Activated naive CD4-positive, alpha-beta T cell treated with anti-CD3 and anti-CD28 coated beads, Interleukin-2, amount 10 ng/mL, durations not matched to agents 7 days and 5 days (primary cell): ENCODE measurements at regions of chr11 and their contacts with region 1.

Region 1: GRCh38 chr11:65418711-65419459 is 3.7 kb upstream of the NEAT1 start:
- DNase-seq: peak; percentile 95
- H3K4me3 Mint-ChIP-seq: peak overlapping the region; percentile 87
- H3K27ac Mint-ChIP-seq: peak overlapping the region; percentile 97
- H3K4me1 Mint-ChIP-seq: peaks cover 49% of the 10 kb centered on the region
- H3K27me3 Mint-ChIP-seq: peaks cover 20% of the 10 kb centered on the region

Region 2: GRCh38 chr11:65393513-65394090 is 25.3 kb before region 1 on chr11:
- CTCF ChIA-PET with region 1: interaction called, 13 read pairs
- DNase-seq: no peak
- H3K4me3 Mint-ChIP-seq: no peak overlapping the region
- H3K27ac Mint-ChIP-seq: no peak overlapping the region
- H3K4me1 Mint-ChIP-seq: peaks cover 26% of the 10 kb centered on the region
- H3K27me3 Mint-ChIP-seq: no peaks in the 10 kb centered on the region

Region 3: DNA sequence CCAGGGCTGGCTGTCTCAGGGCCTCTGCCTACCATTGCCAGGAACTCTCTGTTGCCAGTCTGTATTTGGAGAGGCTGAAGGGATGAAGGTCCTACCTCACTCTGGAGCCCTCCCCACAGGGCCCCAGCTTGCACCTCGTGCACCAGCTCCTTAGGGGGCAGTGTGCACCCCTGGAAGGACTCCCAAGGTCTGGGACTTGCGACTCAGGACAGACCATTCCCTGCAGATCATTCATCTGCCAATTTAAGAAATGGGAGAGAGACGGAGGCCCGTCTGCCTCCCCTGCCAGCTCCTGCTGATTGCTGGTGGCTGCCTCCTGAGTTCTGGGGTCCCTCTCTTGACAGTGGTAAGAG is 52.5 kb after region 1 on chr11:
- CTCF ChIA-PET with region 1: interaction called, 146 read pairs
- DNase-seq: peak; percentile 41
- H3K4me3 Mint-ChIP-seq: no peak overlapping the region
- H3K27ac Mint-ChIP-seq: peak overlapping the region; percentile 95
- H3K4me1 Mint-ChIP-seq: peaks cover 32% of the 10 kb centered on the region
- H3K27me3 Mint-ChIP-seq: no peaks in the 10 kb centered on the region

Region 4: DNA sequence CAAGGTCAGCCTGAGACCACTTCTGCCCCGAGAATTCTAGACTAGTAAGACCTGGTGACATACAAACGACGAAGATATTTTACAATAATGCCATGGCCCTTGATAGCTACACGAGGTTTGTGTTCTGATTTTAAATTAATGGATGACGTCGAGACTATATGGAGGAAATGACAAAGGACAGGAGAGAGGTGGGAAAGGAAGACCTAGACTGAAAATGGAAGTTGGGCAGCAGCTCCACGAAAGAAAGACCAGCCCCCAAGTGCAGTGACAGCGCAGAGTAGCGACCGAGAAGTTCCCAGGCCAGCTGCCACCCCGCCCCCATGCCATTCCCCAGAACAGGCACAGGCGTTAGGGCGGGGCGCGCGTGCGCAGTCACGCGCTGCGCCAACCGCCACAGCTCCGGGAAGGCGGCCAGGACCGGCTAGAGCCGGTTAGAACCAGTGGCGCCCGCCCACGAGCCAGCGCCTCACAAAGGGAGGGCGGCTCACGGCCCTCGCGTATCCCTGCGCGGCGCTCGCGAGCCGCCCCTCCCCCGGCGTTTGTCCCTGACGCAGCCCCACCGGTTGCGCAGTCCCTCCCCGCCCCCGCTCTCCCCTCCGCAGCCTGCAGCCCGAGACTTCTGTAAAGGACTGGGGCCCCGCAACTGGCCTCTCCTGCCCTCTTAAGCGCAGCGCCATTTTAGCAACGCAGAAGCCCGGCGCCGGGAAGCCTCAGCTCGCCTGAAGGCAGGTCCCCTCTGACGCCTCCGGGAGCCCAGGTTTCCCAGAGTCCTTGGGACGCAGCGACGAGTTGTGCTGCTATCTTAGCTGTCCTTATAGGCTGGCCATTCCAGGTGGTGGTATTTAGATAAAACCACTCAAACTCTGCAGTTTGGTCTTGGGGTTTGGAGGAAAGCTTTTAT is 78.5 kb after region 1 on chr11:
- CTCF ChIA-PET with region 1: interaction called, 145 read pairs
- DNase-seq: peak; percentile 99
- H3K4me3 Mint-ChIP-seq: no peak overlapping the region
- H3K27ac Mint-ChIP-seq: no peak overlapping the region
- H3K4me1 Mint-ChIP-seq: peaks cover 36% of the 10 kb centered on the region
- H3K27me3 Mint-ChIP-seq: peaks cover 4% of the 10 kb centered on the region

Region 5: GRCh38 chr11:65512306-65512705 is 93.4 kb after region 1 on chr11:
- CTCF ChIA-PET with region 1: interaction called, 145 read pairs
- DNase-seq: no peak
- H3K4me3 Mint-ChIP-seq: no peak overlapping the region
- H3K27ac Mint-ChIP-seq: no peak overlapping the region
- H3K4me1 Mint-ChIP-seq: peaks cover 20% of the 10 kb centered on the region
- H3K27me3 Mint-ChIP-seq: peaks cover 17% of the 10 kb centered on the region